Naive thymus-derived CD4-positive, alpha-beta T cell (primary cell): ENCODE measurements at regions of chr17 and their contacts with region 1.

Region 1: DNA sequence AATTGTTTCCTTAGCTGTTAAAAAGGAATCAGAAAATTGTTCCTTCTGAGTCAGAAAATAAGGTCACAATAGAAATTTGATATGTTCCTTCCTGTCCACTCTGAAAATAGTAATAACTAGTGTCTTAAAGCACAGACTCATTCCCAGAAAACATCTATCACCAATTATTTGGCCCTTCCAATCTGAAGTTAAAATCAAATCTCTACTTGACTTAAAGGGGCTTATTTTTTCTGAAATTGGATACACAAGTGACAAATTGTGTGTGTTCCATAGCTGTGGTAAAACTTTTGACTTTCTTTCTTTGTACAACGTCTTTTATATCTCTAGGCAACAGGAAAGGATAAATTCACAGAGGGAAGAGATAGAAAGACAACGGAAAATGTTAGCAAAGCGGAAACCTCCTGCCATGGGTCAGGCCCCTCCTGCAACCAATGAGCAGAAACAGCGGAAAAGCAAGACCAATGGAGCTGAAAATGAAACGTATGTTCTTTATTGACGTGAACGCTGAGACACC is 54.5 kb upstream of the MRC2 start:
- DNase-seq: no peak
- ATAC-seq: no peak
- H3K4me3 ChIP-seq: no peak overlapping the region
- H3K4me3 Mint-ChIP-seq: no peak overlapping the region
- H3K27ac ChIP-seq: no peak overlapping the region
- H3K27ac Mint-ChIP-seq: peak overlapping the region in 2 of 9 donors; percentile 24 to 27
- H3K4me1 ChIP-seq: no peaks in the 10 kb centered on the region
- H3K4me1 Mint-ChIP-seq: peaks cover 0 to 12% (median 4%) of the 10 kb centered on the region in 7 donors
- H3K27me3 ChIP-seq: no peaks in the 10 kb centered on the region
- H3K27me3 Mint-ChIP-seq: no peaks in the 10 kb centered on the region

Region 2: DNA sequence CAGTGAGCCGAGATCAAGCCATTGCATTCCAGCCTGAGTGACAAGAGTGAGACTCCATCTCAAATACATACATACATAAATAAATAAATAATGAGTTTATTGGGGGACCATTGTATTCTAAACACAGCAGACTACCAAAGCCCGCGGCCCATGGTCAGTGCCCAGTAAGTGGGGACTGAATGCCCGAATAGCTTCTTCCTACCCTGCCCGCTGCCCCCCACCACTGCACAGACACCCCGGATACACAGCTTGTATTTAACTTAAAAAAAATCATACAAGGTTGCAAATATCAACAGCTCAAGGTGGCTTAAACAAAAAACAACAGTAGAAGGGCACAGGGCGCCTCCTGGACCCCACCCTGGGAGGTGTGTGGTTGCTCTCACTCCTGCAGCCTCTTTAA is 116.9 kb before region 1 on chr17:
- CTCF ChIA-PET with region 1: no interaction called
- POLR2A ChIA-PET with region 1: no interaction called
- intact Hi-C with region 1: no loop called
- DNase-seq: no peak
- ATAC-seq: no peak
- H3K4me3 ChIP-seq: no peak overlapping the region
- H3K4me3 Mint-ChIP-seq: no peak overlapping the region
- H3K27ac ChIP-seq: no peak overlapping the region
- H3K27ac Mint-ChIP-seq: no peak overlapping the region
- H3K4me1 ChIP-seq: peaks cover 0 to 10% of the 10 kb centered on the region in 2 donors
- H3K4me1 Mint-ChIP-seq: peaks cover 6 to 9% (median 8%) of the 10 kb centered on the region in 7 donors
- H3K27me3 ChIP-seq: no peaks in the 10 kb centered on the region
- H3K27me3 Mint-ChIP-seq: peaks cover 0 to 4% (median 0%) of the 10 kb centered on the region in 5 donors

Region 3: GRCh38 chr17:62592341-62593099 is 19.6 kb after region 1 on chr17:
- CTCF ChIA-PET with region 1: interaction called, 10 read pairs
- POLR2A ChIA-PET with region 1: no interaction called
- intact Hi-C with region 1: no loop called
- DNase-seq: no peak
- ATAC-seq: no peak
- H3K4me3 ChIP-seq: no peak overlapping the region
- H3K4me3 Mint-ChIP-seq: no peak overlapping the region
- H3K27ac ChIP-seq: no peak overlapping the region
- H3K27ac Mint-ChIP-seq: no peak overlapping the region
- H3K4me1 ChIP-seq: no peaks in the 10 kb centered on the region
- H3K4me1 Mint-ChIP-seq: no peaks in the 10 kb centered on the region
- H3K27me3 ChIP-seq: no peaks in the 10 kb centered on the region
- H3K27me3 Mint-ChIP-seq: no peaks in the 10 kb centered on the region